Right ventricle myocardium inferior (tissue), 1 donor: ENCODE measurements at regions of chr11 and their contacts with region 1.

Region 1: DNA sequence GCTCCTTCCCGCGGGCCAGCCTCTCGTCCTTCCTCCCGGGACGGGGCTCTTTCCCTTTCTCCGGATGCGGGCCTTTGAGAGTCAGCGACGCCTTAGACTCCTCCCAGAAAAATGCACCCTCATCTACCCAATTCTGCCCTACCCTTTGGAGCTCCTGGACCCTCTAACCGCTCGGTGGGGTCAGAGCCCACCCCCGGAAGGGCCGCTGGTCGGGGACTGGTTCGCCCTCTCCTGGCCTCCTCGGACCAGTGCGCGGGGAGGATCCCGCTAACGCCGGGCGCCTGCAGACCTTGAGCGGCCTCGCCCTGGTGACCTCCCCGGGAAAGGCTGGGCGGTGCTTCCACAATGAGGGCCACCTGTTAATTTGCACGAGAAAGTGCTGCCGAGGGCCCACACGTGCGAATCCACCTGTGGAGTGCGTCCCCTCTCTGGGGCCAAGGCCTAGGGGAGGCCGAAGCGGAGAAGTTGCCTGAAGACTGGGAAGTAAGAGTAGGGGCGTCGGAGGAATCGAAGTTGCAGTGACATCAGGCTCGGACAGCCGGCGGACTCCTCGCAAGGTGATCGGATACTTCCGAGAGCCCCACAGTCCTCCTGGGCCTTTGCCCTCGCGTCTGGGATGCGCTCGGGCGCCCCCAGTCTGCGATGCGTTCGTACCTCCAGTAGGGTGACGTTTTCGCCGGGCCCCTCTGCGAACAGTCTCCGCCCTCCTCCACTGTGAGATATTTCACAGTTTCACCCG is 61.5 kb downstream of the ENDOD1 start:
- DNase-seq: peak; percentile 93
- ATAC-seq: peak; percentile 97

Region 2: GRCh38 chr11:95067039-95067840 is 83.9 kb before region 1 on chr11:
- intact Hi-C with region 1: loop called (anchors 1 kb)
- DNase-seq: peak; percentile 91
- ATAC-seq: peak; percentile 88

Region 3: GRCh38 chr11:95108159-95108611 is 42.9 kb before region 1 on chr11:
- intact Hi-C with region 1: loop called (anchors 2 kb)
- DNase-seq: no peak
- ATAC-seq: peak; percentile 43

Region 4: GRCh38 chr11:95182397-95182796 is 31.3 kb after region 1 on chr11:
- intact Hi-C with region 1: no loop called
- DNase-seq: no peak
- ATAC-seq: no peak

Region 5: GRCh38 chr11:95193541-95193940 is 42.4 kb after region 1 on chr11:
- intact Hi-C with region 1: no loop called
- DNase-seq: no peak
- ATAC-seq: no peak

Region 6: DNA sequence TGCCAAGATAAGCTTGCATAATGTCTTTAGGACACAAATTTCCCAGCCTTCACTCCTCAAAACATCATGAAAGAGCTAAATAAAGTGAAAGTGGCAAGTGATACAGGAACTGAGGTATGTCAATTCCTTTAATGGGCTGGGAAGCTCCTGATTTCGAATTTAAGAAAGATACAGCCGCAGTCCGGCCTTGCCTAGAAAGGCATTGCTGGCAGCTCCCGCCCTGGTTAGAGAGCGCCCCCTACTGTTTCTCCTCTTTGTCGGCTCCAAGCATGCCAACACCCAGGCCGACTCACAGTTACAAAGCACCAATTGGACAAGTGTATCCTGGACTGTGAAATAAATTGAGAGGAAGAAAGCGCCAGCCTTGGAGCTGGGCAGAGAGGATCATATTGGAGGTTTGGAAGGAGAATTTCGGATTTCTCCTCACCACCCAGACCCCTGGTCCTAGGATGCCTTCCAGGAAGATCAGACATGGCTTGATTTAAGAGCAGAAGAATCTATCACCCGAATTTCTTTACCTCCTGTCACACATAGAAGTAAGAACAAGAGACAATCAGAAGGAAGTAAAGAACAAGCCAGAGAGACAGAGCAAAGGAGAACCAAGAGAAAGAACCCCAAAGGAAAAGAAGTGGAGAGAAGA is 554.5 kb after region 1 on chr11:
- intact Hi-C with region 1: loop called (anchors 1 kb)
- DNase-seq: peak; percentile 88
- ATAC-seq: peak; percentile 97